AG04449 (cell line): ENCODE measurements at regions of chr19 and their contacts with region 1.

Region 1: GRCh38 chr19:47296036-47296435 is 13.6 kb upstream of the C5AR1 start:
- DNase-seq: no peak
- H3K4me3 ChIP-seq: no peak overlapping the region
- CTCF ChIP-seq: peak; percentile 66

Region 2: GRCh38 chr19:47284324-47284899 is 11.6 kb before region 1 on chr19:
- CTCF ChIA-PET with region 1: interaction called, 41 read pairs
- POLR2A ChIA-PET with region 1: no interaction called
- DNase-seq: no peak
- H3K4me3 ChIP-seq: no peak overlapping the region
- CTCF ChIP-seq: peak; percentile 67

Region 3: GRCh38 chr19:47637550-47637949 is 341.5 kb after region 1 on chr19:
- CTCF ChIA-PET with region 1: no interaction called
- POLR2A ChIA-PET with region 1: no interaction called
- DNase-seq: no peak
- H3K4me3 ChIP-seq: no peak overlapping the region
- CTCF ChIP-seq: no peak